Uterus (tissue), 4 donors: ENCODE measurements at regions of chr5 and their contacts with region 1.

Region 1: DNA sequence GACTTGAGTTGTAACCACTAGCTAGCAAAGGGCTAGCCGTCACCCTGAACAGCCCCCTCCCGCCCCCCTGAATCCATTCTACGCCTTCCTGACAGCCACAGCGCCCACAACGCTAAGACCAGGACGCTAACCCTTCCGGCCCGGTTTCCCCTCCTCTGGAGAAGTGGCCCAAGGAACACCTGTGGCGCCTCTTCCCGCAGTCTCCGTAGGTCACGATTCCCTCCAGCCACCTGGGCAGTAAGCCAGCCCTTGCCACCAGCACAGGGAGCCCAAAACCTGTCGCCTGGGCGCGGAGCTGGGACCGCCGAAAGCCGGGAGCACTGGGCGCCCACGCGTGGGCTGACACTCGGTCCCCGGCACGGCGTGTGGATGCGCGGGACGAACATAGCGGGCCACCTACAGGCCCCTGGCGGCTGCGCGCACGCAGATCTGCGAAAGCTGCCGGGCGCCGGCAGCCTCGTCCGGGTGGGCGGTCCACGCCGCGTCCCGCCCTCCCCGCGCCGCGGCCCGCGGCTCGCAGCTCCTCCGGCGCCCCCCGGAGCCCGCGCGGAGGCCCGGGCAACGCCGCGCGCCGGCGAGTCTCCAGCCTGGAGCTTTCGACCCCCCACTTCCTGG is 595 bp downstream of the IRF1 start:
- DNase-seq: peak; percentile 63 to 71
- H3K4me3 ChIP-seq: peak overlapping the region; percentile 87 to 91
- H3K27ac ChIP-seq: peak overlapping the region; percentile 97 to 98
- H3K4me1 ChIP-seq: peaks cover 8 to 9% of the 10 kb centered on the region in 2 donors
- H3K27me3 ChIP-seq: no peaks in the 10 kb centered on the region
- CTCF ChIP-seq: peak; percentile 10 to 52 (median 22)
- POLR2A ChIP-seq: no peak

Region 2: DNA sequence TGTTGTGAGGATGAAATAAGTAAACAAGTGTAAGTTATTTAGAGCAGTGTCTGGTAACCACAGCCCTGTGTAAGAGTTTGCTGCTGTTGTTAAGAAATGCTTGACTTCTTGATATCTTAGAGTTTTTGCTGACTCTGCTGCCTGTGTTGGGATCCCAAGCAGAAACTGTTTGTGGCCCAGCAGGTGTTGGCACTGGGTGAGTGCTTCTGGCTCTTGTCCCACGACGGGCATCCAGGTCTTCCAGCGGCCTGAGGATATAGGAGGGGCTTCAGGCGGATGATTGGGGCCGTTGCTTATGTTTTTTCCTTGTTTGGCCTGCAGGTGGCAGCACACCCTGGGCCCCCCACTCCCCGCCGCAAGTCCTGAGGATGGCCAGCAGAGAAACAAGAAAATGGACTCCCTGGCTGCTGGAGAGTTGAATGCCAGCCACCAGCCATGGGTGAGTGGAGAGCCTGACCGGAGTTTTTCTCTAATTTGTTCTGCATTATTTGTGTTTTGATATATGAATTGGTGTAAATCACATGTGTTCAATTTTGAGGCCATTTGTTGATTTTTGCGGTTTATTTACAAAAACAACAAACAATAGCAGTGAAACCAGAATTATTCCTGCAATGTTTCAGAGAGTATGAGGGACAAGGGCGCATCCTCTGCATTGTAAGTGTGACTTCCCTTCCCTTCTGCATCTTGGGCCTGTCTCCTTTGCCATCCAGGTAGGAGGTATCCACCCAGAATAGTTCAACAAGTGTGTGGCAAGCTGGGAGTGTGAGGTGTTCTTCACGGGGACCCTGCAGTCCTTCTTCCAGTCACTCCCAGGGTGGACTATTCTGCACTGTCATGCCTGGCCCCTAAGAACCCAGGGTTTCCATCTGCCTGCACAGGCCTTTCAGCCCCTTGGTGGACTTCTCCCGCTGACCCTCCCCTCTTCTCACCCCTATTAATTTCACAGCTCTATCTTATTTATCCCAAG is 70.2 kb before region 1 on chr5:
- intact Hi-C with region 1: loop called (anchors 5 kb)
- DNase-seq: peak; percentile 73 to 77
- H3K4me3 ChIP-seq: no peak overlapping the region
- H3K27ac ChIP-seq: peak overlapping the region; percentile 62 to 81
- H3K4me1 ChIP-seq: peaks cover 5 to 22% of the 10 kb centered on the region in 2 donors
- H3K27me3 ChIP-seq: no peaks in the 10 kb centered on the region
- CTCF ChIP-seq: peak; percentile 86 to 94 (median 90)
- POLR2A ChIP-seq: no peak